Heart left ventricle (tissue), 16 donors: ENCODE measurements at regions of chr2 and their contacts with region 1.

Region 1: DNA sequence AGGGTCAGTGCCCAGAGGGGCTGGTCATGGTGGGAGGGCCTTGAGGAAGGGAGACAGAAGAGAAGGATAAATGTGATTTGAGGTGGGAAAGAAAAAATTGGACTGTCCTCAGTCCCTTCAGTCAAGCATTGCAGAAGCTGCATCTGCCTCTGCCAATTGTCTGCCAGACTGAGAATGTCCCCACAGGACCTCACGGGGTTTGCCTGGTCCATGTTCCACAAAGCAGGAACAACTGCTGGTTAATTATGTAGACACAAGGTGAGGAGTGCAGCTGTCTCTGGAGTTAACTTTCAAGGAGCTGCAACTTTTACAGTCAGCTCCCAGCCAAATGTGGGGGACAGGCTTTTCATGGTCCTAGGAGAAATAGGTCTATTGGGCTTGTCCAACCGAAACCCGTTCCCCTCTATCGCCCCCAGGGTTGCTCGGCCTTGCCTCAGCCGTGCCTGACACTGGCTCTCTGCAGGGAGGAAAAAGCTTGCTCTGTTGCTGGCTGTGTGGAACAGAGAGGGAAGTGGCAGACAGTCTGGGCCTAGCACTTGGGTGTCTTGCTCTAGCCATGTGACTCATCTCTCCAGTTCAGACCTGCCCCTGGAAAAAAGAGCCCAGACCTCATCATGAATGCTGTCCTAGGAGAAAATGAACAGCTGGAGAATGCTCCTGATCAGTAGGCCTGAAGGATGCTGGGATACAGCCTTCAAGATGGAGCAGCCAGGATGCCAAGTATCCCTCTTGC is 31.1 kb upstream of the PAX8 start:
- DNase-seq: no peak
- ATAC-seq: peak in 1 of 4 donors; percentile 7
- H3K4me3 ChIP-seq: no peak overlapping the region
- H3K27ac ChIP-seq: no peak overlapping the region
- H3K4me1 ChIP-seq: no peaks in the 10 kb centered on the region
- H3K27me3 ChIP-seq: no peaks in the 10 kb centered on the region
- CTCF ChIP-seq: no peak
- POLR2A ChIP-seq: no peak

Region 2: GRCh38 chr2:113273027-113273551 is 36.7 kb before region 1 on chr2:
- intact Hi-C with region 1: no loop called
- DNase-seq: no peak
- ATAC-seq: no peak
- H3K4me3 ChIP-seq: no peak overlapping the region
- H3K27ac ChIP-seq: no peak overlapping the region
- H3K4me1 ChIP-seq: peaks cover 0 to 26% (median 9%) of the 10 kb centered on the region in 12 donors
- H3K27me3 ChIP-seq: peaks cover 20 to 99% (median 73%) of the 10 kb centered on the region in 9 donors
- CTCF ChIP-seq: no peak
- POLR2A ChIP-seq: no peak

Region 3: DNA sequence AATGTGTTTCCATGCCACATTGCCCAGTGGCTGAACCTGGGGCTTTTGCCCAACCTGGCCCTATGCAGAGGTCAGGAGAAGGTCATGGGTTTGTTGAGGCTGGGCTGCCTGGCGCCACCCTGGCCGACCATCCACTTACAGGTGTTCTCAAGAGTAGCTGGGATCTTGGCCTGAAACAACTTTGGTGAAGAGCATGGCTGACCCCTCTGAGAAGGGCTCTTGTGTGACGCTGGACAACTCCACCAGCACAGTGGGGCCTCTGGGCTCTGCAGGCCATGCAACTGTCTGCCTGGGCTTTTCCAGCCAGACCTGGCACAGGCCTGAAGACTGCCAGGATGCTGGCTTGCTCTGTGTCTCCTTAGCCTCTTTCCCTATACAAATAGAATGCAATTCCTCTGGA is 51.2 kb after region 1 on chr2:
- intact Hi-C with region 1: loop called in 1 of 10 experiments (anchors 10 kb)
- DNase-seq: no peak
- ATAC-seq: peak in 1 of 4 donors; percentile 15
- H3K4me3 ChIP-seq: no peak overlapping the region
- H3K27ac ChIP-seq: no peak overlapping the region
- H3K4me1 ChIP-seq: no peaks in the 10 kb centered on the region
- H3K27me3 ChIP-seq: no peaks in the 10 kb centered on the region
- CTCF ChIP-seq: no peak
- POLR2A ChIP-seq: no peak